H1 (cell line): ENCODE measurements at regions of chr17 and their contacts with region 1.

Region 1: DNA sequence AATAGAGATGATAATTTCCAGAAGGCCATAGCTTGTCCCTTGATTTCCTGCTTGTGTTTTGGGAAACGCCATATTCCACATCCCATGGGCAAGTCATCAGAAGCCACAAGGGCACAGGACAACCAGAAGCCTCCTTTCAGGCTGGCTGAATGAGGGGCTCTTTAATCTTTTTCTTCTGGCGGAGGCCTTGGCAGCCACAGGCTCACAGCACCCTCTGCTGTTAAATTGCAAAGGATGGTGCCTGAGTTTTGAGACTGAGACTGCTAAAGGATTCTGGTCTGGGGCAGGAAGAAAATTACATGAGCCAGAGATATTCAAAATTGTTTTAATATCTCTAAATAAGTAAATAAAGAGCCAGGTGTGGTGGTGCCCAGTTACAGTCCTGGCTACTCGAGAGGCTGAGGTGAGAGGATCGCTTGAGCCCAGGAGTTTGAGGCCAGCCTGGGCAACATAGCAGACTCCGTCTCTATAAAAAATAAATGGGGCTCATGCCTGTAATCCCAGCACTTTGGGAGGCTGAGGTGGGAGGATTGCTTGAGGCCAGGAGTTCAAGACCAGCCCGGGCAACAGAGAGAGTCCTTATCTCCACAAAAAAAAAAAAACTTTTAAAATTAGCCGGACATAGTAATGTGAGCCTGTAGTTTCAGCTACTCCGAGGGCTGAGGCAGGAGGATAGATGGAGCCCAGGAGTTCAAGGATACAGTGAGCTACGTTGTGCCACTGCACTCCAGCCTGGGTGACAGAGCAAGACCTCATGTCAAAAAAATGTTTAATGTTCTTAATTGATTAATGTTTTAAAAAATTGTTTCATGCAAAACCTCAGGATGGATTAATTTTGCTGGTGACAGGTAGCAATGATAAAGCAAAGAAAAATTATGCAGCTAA is 26.3 kb downstream of the AARSD1 start:
- DNase-seq: peak; percentile 25 to 55
- H3K4me3 ChIP-seq: no peak overlapping the region
- H3K27ac ChIP-seq: no peak overlapping the region
- H3K4me1 ChIP-seq: no peaks in the 10 kb centered on the region
- H3K27me3 ChIP-seq: no peaks in the 10 kb centered on the region
- CTCF ChIP-seq: peak; percentile 47 to 87 (median 85)
- EP300 ChIP-seq: no peak
- POLR2A ChIP-seq: no peak
- RAD21 ChIP-seq: peak; percentile 96

Region 2: GRCh38 chr17:42849451-42850181 is 88.3 kb before region 1 on chr17:
- CTCF ChIA-PET with region 1: interaction called, 141 read pairs
- POLR2A ChIA-PET with region 1: interaction called, 73 read pairs
- DNase-seq: no peak
- H3K4me3 ChIP-seq: no peak overlapping the region
- H3K27ac ChIP-seq: no peak overlapping the region
- H3K4me1 ChIP-seq: no peaks in the 10 kb centered on the region; a peak in 1 of 7 replicates
- H3K27me3 ChIP-seq: no peaks in the 10 kb centered on the region; a peak in 1 of 7 replicates
- CTCF ChIP-seq: no peak
- EP300 ChIP-seq: no peak
- POLR2A ChIP-seq: no peak
- RAD21 ChIP-seq: no peak